Activated B cell treated with CpG ODN at 0.5 μM for 24 hours (primary cell): ENCODE measurements at regions of chr14 and their contacts with region 1.

Region 1: GRCh38 chr14:59301354-59301753 is 112.9 kb downstream of the DAAM1 start:
- DNase-seq: no peak
- ATAC-seq: peak; percentile 85
- H3K4me3 Mint-ChIP-seq: peak overlapping the region; percentile 45
- H3K27ac Mint-ChIP-seq: peak overlapping the region; percentile 62
- H3K4me1 Mint-ChIP-seq: peaks cover 64% of the 10 kb centered on the region
- H3K27me3 Mint-ChIP-seq: no peaks in the 10 kb centered on the region
- CTCF ChIP-seq: no peak

Region 2: GRCh38 chr14:59245809-59246295 is 55.5 kb before region 1 on chr14:
- CTCF ChIA-PET with region 1: no interaction called
- POLR2A ChIA-PET with region 1: no interaction called
- intact Hi-C with region 1: loop called (anchors 2 kb)
- DNase-seq: no peak
- ATAC-seq: peak; percentile 64
- H3K4me3 Mint-ChIP-seq: peak overlapping the region; percentile 50
- H3K27ac Mint-ChIP-seq: peak overlapping the region; percentile 65
- H3K4me1 Mint-ChIP-seq: peaks cover 39% of the 10 kb centered on the region
- H3K27me3 Mint-ChIP-seq: no peaks in the 10 kb centered on the region
- CTCF ChIP-seq: no peak

Region 3: DNA sequence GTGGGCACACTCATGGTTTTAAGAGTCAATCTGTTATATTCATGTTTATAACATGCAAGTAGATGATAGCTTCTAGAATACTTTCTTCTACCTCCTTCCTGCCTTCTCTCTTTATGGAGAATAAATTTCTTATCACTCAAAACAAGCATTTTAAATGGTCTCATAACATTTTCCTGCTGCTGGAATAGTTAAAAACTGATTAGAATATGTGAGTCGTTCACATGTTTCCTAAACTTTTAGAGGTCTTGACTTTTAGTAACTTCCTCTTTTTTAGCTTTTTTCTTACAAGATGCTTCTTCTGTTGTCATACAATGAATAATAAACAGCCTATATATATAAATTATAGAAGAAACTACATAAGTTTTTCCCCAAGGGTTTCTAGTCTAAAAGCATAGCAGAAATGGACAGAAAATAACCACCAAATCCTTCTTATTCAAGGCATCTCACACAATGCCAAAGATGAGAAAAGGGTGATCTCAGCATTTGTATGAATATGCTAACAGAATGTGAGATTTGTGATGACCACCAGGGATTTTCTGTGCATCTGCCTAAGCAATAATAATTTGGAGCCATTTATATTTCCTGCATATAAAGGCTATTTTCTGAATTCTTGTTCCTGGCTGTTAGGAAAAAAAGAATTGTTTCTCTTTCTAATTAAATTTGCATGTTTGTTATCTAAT is 14.9 kb after region 1 on chr14:
- CTCF ChIA-PET with region 1: interaction called, 3 read pairs
- POLR2A ChIA-PET with region 1: no interaction called
- intact Hi-C with region 1: loop called (anchors 1 kb)
- DNase-seq: no peak
- ATAC-seq: no peak
- H3K4me3 Mint-ChIP-seq: no peak overlapping the region
- H3K27ac Mint-ChIP-seq: no peak overlapping the region
- H3K4me1 Mint-ChIP-seq: peaks cover 44% of the 10 kb centered on the region
- H3K27me3 Mint-ChIP-seq: no peaks in the 10 kb centered on the region
- CTCF ChIP-seq: no peak

Region 4: DNA sequence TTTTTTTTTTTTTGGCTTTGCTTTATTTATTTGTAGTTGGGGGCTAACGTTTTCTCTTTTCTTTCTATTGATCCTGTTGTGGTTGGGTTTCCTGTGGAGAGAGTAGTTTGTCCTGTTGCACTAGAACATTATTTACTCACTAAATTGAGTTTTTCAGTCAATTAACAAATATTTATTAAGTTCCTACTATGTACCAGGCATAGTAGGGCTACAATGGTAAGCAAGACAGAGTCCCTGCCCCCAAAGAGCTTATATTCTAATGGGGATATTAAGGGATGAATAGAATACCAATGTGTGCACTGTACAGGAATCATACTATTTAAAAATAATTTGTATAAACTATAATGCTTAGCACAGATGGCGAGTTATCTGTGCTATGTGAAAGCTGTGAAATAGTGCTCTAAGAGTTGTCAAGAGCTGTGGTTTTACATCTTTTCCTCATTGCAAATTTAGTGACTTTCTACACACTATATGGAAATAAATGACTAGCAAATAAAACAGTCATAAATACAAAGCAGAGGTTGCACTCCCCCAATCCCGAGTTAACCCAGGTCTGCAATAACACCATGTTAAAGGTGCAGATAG is 68.9 kb after region 1 on chr14:
- CTCF ChIA-PET with region 1: no interaction called
- POLR2A ChIA-PET with region 1: no interaction called
- intact Hi-C with region 1: no loop called
- DNase-seq: no peak
- ATAC-seq: no peak
- H3K4me3 Mint-ChIP-seq: no peak overlapping the region
- H3K27ac Mint-ChIP-seq: no peak overlapping the region
- H3K4me1 Mint-ChIP-seq: no peaks in the 10 kb centered on the region
- H3K27me3 Mint-ChIP-seq: no peaks in the 10 kb centered on the region
- CTCF ChIP-seq: no peak

Region 5: GRCh38 chr14:60760653-60761364 is 1459.5 kb after region 1 on chr14:
- CTCF ChIA-PET with region 1: no interaction called
- POLR2A ChIA-PET with region 1: no interaction called
- intact Hi-C with region 1: no loop called
- DNase-seq: no peak
- ATAC-seq: no peak
- H3K4me3 Mint-ChIP-seq: no peak overlapping the region
- H3K27ac Mint-ChIP-seq: no peak overlapping the region
- H3K4me1 Mint-ChIP-seq: peaks cover 24% of the 10 kb centered on the region
- H3K27me3 Mint-ChIP-seq: no peaks in the 10 kb centered on the region
- CTCF ChIP-seq: no peak